Activated naive CD8-positive, alpha-beta T cell treated with anti-CD3 and anti-CD28 coated beads, Interleukin-2, amount 10 ng/mL, durations not matched to agents 7 days and 5 days (primary cell): ENCODE measurements at regions of chr9 and their contacts with region 1.

Region 1: GRCh38 chr9:27365707-27366376 is 68.9 kb upstream of the EQTN start:
- DNase-seq: peak; percentile 56
- ATAC-seq: peak; percentile 98
- H3K4me3 Mint-ChIP-seq: peak overlapping the region; percentile 69
- H3K27ac Mint-ChIP-seq: peak overlapping the region; percentile 88
- H3K4me1 Mint-ChIP-seq: peaks cover 47% of the 10 kb centered on the region
- H3K27me3 Mint-ChIP-seq: peaks cover 2% of the 10 kb centered on the region

Region 2: GRCh38 chr9:27353474-27354229 is 12.2 kb before region 1 on chr9:
- POLR2A ChIA-PET with region 1: interaction called, 12 read pairs
- DNase-seq: no peak
- ATAC-seq: peak; percentile 80
- H3K4me3 Mint-ChIP-seq: peak overlapping the region; percentile 51
- H3K27ac Mint-ChIP-seq: peak overlapping the region; percentile 80
- H3K4me1 Mint-ChIP-seq: peaks cover 51% of the 10 kb centered on the region
- H3K27me3 Mint-ChIP-seq: peaks cover 2% of the 10 kb centered on the region

Region 3: GRCh38 chr9:27377147-27377807 is 11.4 kb after region 1 on chr9:
- POLR2A ChIA-PET with region 1: interaction called, 21 read pairs
- DNase-seq: no peak
- ATAC-seq: no peak
- H3K4me3 Mint-ChIP-seq: no peak overlapping the region
- H3K27ac Mint-ChIP-seq: peak overlapping the region; percentile 30
- H3K4me1 Mint-ChIP-seq: peaks cover 38% of the 10 kb centered on the region
- H3K27me3 Mint-ChIP-seq: peaks cover 3% of the 10 kb centered on the region